Caco-2 (cell line): ENCODE measurements at regions of chr6 and their contacts with region 1.

Region 1: GRCh38 chr6:157946865-157947532 is 34.7 kb upstream of the SYNJ2 start:
- DNase-seq: peak in 1 of 2 experiments; percentile 33
- H3K4me3 ChIP-seq: no peak overlapping the region
- H3K4me3 Mint-ChIP-seq: no peak overlapping the region
- H3K27ac Mint-ChIP-seq: no peak overlapping the region
- H3K4me1 ChIP-seq: peaks cover 6% of the 10 kb centered on the region
- H3K4me1 Mint-ChIP-seq: peaks cover under 1% of the 10 kb centered on the region
- H3K27me3 ChIP-seq: no peaks in the 10 kb centered on the region
- H3K27me3 Mint-ChIP-seq: no peaks in the 10 kb centered on the region
- CTCF ChIP-seq: peak; percentile 23 to 84

Region 2: GRCh38 chr6:157688960-157689599 is 257.9 kb before region 1 on chr6:
- CTCF ChIA-PET with region 1: no interaction called
- POLR2A ChIA-PET with region 1: no interaction called
- intact Hi-C with region 1: loop called (anchors 5 kb)
- DNase-seq: peak in 1 of 2 experiments; percentile 34
- H3K4me3 ChIP-seq: no peak overlapping the region
- H3K4me3 Mint-ChIP-seq: no peak overlapping the region
- H3K27ac Mint-ChIP-seq: no peak overlapping the region
- H3K4me1 ChIP-seq: 0 out of 2 replicates have a peak, but pooled peaks cover 5% of the 10 kb centered on the region
- H3K4me1 Mint-ChIP-seq: peaks cover 7% of the 10 kb centered on the region
- H3K27me3 ChIP-seq: no peaks in the 10 kb centered on the region
- H3K27me3 Mint-ChIP-seq: no peaks in the 10 kb centered on the region
- CTCF ChIP-seq: peak in 1 of 2 experiments; percentile 23

Region 3: DNA sequence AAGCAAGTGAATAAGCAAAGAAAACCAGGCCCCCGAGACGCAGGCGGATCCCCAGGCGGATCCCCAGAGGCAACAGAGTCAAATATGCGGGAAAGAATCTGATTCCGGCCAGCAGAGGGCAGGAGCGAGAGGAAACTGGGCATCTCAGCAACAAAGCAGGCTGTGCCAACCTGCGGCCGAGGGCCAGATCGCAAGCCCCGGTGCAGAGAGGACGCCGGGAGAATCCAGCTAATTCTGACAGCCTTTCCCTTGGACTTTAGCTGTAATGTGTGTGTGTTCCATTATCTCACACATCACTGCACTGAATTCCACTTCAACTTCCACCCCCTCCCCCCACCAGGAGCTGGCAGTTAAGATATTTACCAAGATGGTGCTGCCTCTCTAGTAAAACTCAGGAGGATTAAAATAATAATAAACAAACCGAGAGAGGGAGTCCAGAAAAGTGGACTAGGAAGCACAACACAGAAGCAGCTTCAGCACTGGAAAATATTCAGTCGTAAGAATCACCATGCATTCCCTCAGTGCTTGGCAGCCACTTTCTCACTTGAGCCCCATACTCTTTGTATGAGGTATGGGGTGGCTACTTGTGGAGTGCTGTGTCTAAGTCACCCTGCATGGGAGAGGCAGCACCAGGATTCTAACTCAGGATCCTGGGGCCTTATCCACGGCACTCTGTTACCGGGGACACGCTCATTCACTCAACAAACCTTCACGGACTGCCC is 190.1 kb before region 1 on chr6:
- CTCF ChIA-PET with region 1: no interaction called
- POLR2A ChIA-PET with region 1: no interaction called
- intact Hi-C with region 1: loop called (anchors 1 kb)
- DNase-seq: peak; percentile 69 to 75
- H3K4me3 ChIP-seq: no peak overlapping the region
- H3K4me3 Mint-ChIP-seq: no peak overlapping the region
- H3K27ac Mint-ChIP-seq: no peak overlapping the region
- H3K4me1 ChIP-seq: peaks cover 21% of the 10 kb centered on the region
- H3K4me1 Mint-ChIP-seq: peaks cover 48% of the 10 kb centered on the region
- H3K27me3 ChIP-seq: no peaks in the 10 kb centered on the region
- H3K27me3 Mint-ChIP-seq: no peaks in the 10 kb centered on the region
- CTCF ChIP-seq: peak; percentile 73 to 75

Region 4: GRCh38 chr6:158018851-158019361 is 71.9 kb after region 1 on chr6:
- CTCF ChIA-PET with region 1: no interaction called
- POLR2A ChIA-PET with region 1: no interaction called
- intact Hi-C with region 1: no loop called
- DNase-seq: no peak
- H3K4me3 ChIP-seq: no peak overlapping the region
- H3K4me3 Mint-ChIP-seq: no peak overlapping the region
- H3K27ac Mint-ChIP-seq: no peak overlapping the region
- H3K4me1 ChIP-seq: no peaks in the 10 kb centered on the region; the same call in 1 of the 2 replicates
- H3K4me1 Mint-ChIP-seq: peaks cover 9% of the 10 kb centered on the region
- H3K27me3 ChIP-seq: no peaks in the 10 kb centered on the region
- H3K27me3 Mint-ChIP-seq: no peaks in the 10 kb centered on the region
- CTCF ChIP-seq: no peak